Calu3 (cell line): ENCODE measurements at regions of chr1 and their contacts with region 1.

Region 1: GRCh38 chr1:154669464-154670282 is 61.7 kb upstream of the ADAR start:
- DNase-seq: peak; percentile 80
- H3K4me3 Mint-ChIP-seq: no peak overlapping the region
- H3K27ac Mint-ChIP-seq: no peak overlapping the region
- H3K4me1 Mint-ChIP-seq: no peaks in the 10 kb centered on the region
- H3K27me3 Mint-ChIP-seq: peaks cover 22% of the 10 kb centered on the region
- CTCF ChIP-seq: peak; percentile 82

Region 2: GRCh38 chr1:154583773-154584172 is 85.9 kb before region 1 on chr1:
- CTCF ChIA-PET with region 1: no interaction called
- intact Hi-C with region 1: no loop called
- DNase-seq: no peak
- H3K4me3 Mint-ChIP-seq: no peak overlapping the region
- H3K27ac Mint-ChIP-seq: no peak overlapping the region
- H3K4me1 Mint-ChIP-seq: no peaks in the 10 kb centered on the region
- H3K27me3 Mint-ChIP-seq: no peaks in the 10 kb centered on the region
- CTCF ChIP-seq: no peak

Region 3: GRCh38 chr1:154747740-154748404 is 78.2 kb after region 1 on chr1:
- CTCF ChIA-PET with region 1: no interaction called
- intact Hi-C with region 1: loop called (anchors 1 kb)
- DNase-seq: no peak
- H3K4me3 Mint-ChIP-seq: no peak overlapping the region
- H3K27ac Mint-ChIP-seq: no peak overlapping the region
- H3K4me1 Mint-ChIP-seq: no peaks in the 10 kb centered on the region
- H3K27me3 Mint-ChIP-seq: peaks cover 89% of the 10 kb centered on the region
- CTCF ChIP-seq: no peak

Region 4: GRCh38 chr1:154796303-154796892 is 126.7 kb after region 1 on chr1:
- CTCF ChIA-PET with region 1: no interaction called
- intact Hi-C with region 1: no loop called
- DNase-seq: no peak
- H3K4me3 Mint-ChIP-seq: no peak overlapping the region
- H3K27ac Mint-ChIP-seq: no peak overlapping the region
- H3K4me1 Mint-ChIP-seq: no peaks in the 10 kb centered on the region
- H3K27me3 Mint-ChIP-seq: peaks cover 97% of the 10 kb centered on the region
- CTCF ChIP-seq: no peak

Region 5: GRCh38 chr1:154878371-154879022 is 208.8 kb after region 1 on chr1:
- CTCF ChIA-PET with region 1: interaction called, 23 read pairs
- intact Hi-C with region 1: loop called (anchors 1 kb)
- DNase-seq: peak; percentile 87
- H3K4me3 Mint-ChIP-seq: no peak overlapping the region
- H3K27ac Mint-ChIP-seq: no peak overlapping the region
- H3K4me1 Mint-ChIP-seq: peaks cover 31% of the 10 kb centered on the region
- H3K27me3 Mint-ChIP-seq: peaks cover 56% of the 10 kb centered on the region
- CTCF ChIP-seq: peak; percentile 80

Region 6: GRCh38 chr1:155022927-155023236 is 353.2 kb after region 1 on chr1:
- CTCF ChIA-PET with region 1: no interaction called
- intact Hi-C with region 1: no loop called
- DNase-seq: no peak
- H3K4me3 Mint-ChIP-seq: no peak overlapping the region
- H3K27ac Mint-ChIP-seq: no peak overlapping the region
- H3K4me1 Mint-ChIP-seq: peaks cover 61% of the 10 kb centered on the region
- H3K27me3 Mint-ChIP-seq: no peaks in the 10 kb centered on the region
- CTCF ChIP-seq: no peak

Region 7: GRCh38 chr1:155063550-155064110 is 394.0 kb after region 1 on chr1 and contains the start of gene EFNA4:
- CTCF ChIA-PET with region 1: no interaction called
- intact Hi-C with region 1: loop called (anchors 10 kb)
- DNase-seq: peak; percentile 90
- H3K4me3 Mint-ChIP-seq: peak within 1 kb of the TSS; percentile 76
- H3K27ac Mint-ChIP-seq: peak within 1 kb of the TSS; percentile 89
- H3K4me1 Mint-ChIP-seq: peaks cover 30% of the 10 kb centered on the region
- H3K27me3 Mint-ChIP-seq: no peaks in the 10 kb centered on the region
- CTCF ChIP-seq: no peak
- total RNA-seq, gene EFNA4: 12.6 and 13.9 TPM in 2 replicates